ENCODE measurements at regions of chr4 and their contacts with region 1.

Region 1: DNA sequence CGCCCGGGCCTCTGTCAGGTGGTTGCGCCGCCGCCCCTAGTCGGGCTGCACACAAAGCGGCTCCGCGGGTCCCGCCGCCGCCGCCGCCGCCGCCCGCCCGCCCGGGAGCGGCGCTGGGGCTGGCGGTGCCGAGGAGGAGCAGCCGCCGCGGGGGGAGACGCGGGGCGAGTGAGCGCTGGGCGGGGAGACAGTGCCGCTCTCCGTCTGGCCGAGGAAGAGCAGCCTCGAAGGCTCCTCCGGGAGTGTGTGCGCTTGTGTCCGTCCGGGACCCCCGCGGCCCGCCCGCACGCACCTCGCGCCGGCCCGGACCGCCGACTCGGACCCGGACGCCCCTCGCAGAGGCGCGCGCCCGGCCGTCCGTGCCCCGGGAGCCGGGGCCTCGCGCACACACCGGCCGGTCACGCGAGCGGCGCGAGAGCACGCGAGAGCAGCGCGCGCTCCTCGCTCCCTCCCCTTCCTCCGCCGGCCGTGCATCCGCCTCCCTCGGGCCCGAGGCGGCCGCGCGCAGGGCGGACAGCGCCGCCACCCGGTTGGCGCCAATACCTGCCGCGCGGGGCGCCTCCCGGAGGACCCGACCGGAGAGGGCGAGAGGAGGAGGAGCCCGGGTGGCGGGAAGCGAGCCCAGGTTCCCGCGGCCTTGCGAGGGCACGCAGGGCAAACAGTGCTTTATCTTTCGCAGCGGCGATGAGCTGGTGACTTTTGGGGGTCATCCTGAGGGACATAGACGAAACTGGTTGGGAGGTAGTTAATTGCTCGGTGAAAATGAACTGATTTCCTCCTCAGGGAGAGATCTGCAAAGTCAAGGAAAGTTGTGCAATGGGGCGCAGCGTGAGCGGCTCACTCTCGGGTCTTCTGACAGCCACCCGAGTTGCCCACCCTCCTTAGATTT is at the start of gene PDS5A:
- DNase-seq: peak; percentile 92
- ATAC-seq: peak; percentile 92 to 97
- H3K4me3 ChIP-seq: peak within 1 kb of the TSS; percentile 81
- H3K27ac ChIP-seq: peak within 1 kb of the TSS; percentile 93
- H3K4me1 ChIP-seq: peaks cover 19% of the 10 kb centered on the region
- H3K27me3 ChIP-seq: no peaks in the 10 kb centered on the region
- CTCF ChIP-seq: peak; percentile 85
- total RNA-seq, gene PDS5A: 74.8 TPM

Region 2: DNA sequence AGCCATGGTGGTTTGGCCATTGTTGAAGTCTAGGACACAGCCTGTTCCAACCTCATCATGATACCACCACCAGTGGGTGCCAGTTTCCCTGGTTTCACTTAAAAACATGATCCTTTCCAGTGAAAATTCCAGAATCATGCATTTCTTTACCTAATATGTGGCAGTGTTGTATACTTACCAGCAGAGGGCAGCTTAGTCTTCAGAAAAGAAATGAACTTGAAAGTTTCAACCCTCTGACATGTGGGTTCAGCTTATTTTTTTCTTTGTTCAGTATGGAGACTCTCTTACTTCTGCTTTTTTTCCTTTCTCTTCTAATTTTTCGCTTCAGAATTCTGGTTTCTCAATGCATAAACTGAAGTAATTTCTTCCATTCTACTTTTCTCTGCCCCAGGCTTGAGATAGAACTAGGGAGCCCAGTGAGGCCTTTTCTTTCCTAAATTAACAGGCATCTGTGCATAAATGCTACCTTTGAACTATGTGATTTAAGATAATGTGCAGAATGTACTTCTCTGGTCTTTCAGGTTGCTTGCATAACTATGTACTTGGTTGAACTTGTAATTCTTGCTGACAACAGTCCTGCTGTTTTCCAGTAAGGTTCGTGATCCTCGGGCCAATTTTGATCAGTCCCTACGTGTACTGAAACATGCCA is 508.2 kb before region 1 on chr4:
- intact Hi-C with region 1: loop called (anchors 10 kb)
- DNase-seq: no peak
- ATAC-seq: peak; percentile 87 to 91
- H3K4me3 ChIP-seq: no peak overlapping the region
- H3K27ac ChIP-seq: peak overlapping the region; percentile 15
- H3K4me1 ChIP-seq: no peaks in the 10 kb centered on the region
- H3K27me3 ChIP-seq: no peaks in the 10 kb centered on the region
- CTCF ChIP-seq: peak; percentile 85

Region 3: DNA sequence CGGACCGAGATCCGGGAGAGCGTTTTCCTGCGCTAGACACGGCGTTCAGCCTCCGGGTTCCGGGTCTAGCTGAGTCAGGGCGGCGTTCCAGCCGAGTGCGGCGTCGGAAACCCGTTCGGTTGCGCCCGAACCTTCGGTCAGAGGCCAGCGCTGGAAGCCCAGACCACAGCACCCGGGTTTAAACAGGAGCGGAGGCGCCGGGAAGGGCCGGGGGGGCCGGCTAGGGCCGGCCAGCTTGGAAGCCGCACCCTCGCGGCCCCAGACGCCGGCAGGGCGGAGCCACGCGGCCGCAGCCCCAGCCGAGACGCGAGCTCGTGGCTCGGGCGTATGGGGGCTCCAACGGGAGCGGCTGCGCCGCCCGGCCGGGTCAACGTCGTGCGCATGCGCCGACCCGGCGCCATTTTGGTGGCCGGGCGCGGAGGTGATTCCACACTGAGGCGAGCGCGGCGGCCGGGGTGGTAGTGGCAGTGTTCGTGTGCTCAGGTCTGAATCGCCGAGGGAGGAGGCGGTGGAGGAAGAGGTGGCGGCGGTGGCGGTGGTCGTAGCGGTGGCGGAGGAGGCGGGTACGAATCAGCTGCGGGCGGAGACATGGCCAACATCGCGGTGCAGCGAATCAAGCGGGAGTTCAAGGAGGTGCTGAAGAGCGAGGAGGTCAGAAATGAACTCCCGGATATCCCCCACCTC is 279.9 kb before region 1 on chr4 and contains the start of gene UBE2K:
- intact Hi-C with region 1: loop called (anchors 10 kb)
- DNase-seq: peak; percentile 94
- ATAC-seq: peak; percentile 99 to 100
- H3K4me3 ChIP-seq: peak within 1 kb of the TSS; percentile 90
- H3K27ac ChIP-seq: peak within 1 kb of the TSS; percentile 94
- H3K4me1 ChIP-seq: peaks cover 39% of the 10 kb centered on the region
- H3K27me3 ChIP-seq: no peaks in the 10 kb centered on the region
- CTCF ChIP-seq: no peak
- total RNA-seq, gene UBE2K: 54.3 TPM